ENCODE measurements at regions of chr3 and their contacts with region 1.

Region 1: GRCh38 chr3:126679318-126679751 is 24.4 kb upstream of the TXNRD3 start:
- DNase-seq: peak; percentile 78 to 93 (median 92)
- ATAC-seq: peak; percentile 88 to 90
- H3K4me3 ChIP-seq: no peak overlapping the region
- H3K27ac ChIP-seq: no peak overlapping the region
- H3K4me1 ChIP-seq: no peaks in the 10 kb centered on the region
- H3K27me3 ChIP-seq: no peaks in the 10 kb centered on the region

Region 2: DNA sequence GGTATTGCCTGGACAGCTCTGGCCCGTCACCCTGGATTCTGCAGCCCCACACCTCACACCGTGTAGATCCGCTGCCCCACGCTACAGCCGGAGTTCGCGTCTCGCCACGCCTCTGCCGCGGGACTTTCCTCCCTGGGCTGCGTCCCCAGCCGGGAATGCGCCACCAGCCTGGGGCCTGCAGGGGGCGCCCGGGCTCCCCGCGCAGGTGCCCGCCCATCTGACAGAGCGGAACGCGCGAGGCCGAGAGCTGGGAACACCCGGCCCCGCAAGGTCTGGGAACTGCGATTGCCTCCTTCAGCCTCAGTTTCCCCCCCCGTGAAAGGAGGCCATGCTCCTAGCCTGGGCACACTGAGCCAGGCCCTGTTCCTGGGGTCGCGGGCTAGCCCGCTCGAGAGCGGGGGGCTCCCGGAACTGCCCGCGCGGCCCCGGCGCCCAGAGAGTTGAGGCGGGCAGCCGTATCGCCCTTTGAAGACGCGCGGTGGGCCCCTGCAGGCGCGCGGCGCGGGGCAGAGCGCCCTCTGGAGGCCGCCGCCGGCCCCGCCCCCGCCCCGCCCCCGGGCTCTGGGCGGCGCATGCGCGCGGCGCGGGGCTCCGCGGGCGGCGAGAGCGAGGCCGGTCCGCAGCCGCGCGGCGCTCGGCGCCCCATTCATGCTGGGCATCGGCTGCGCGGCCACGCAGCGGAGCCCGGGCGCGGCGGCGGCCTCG is 303.3 kb after region 1 on chr3 and contains the start of gene PLXNA1:
- intact Hi-C with region 1: loop called in 2 of 4 experiments (anchors 10 kb)
- DNase-seq: peak; percentile 84 to 95 (median 93)
- ATAC-seq: peak; percentile 86
- H3K4me3 ChIP-seq: peak within 1 kb of the TSS; percentile 95
- H3K27ac ChIP-seq: peak within 1 kb of the TSS; percentile 69
- H3K4me1 ChIP-seq: peaks cover 3% of the 10 kb centered on the region
- H3K27me3 ChIP-seq: no peaks in the 10 kb centered on the region
- total RNA-seq, gene PLXNA1: 12.8 to 17.8 (median 15.2) TPM

Region 3: GRCh38 chr3:127172781-127173515 is 493.6 kb after region 1 on chr3:
- intact Hi-C with region 1: loop called in 1 of 4 experiments (anchors 10 kb)
- DNase-seq: no peak
- ATAC-seq: no peak
- H3K4me3 ChIP-seq: no peak overlapping the region
- H3K27ac ChIP-seq: no peak overlapping the region
- H3K4me1 ChIP-seq: no peaks in the 10 kb centered on the region
- H3K27me3 ChIP-seq: no peaks in the 10 kb centered on the region

Region 4: GRCh38 chr3:127455541-127456450 is 776.5 kb after region 1 on chr3:
- intact Hi-C with region 1: loop called in 2 of 4 experiments (anchors 5 kb)
- DNase-seq: peak; percentile 75 to 89 (median 89)
- ATAC-seq: peak; percentile 89 to 94
- H3K4me3 ChIP-seq: peak overlapping the region; percentile 19
- H3K27ac ChIP-seq: no peak overlapping the region
- H3K4me1 ChIP-seq: no peaks in the 10 kb centered on the region
- H3K27me3 ChIP-seq: no peaks in the 10 kb centered on the region

Region 5: GRCh38 chr3:127544192-127544802 is 865.0 kb after region 1 on chr3:
- intact Hi-C with region 1: loop called (anchors 5 to 10 kb)
- DNase-seq: peak; percentile 76 to 91 (median 84)
- ATAC-seq: peak; percentile 39 to 54
- H3K4me3 ChIP-seq: no peak overlapping the region
- H3K27ac ChIP-seq: no peak overlapping the region
- H3K4me1 ChIP-seq: no peaks in the 10 kb centered on the region
- H3K27me3 ChIP-seq: no peaks in the 10 kb centered on the region

Measured in right cardiac atrium (tissue), 5 donors.